ENCODE measurements at regions of chr4 and their contacts with region 1.

Region 1: GRCh38 chr4:122469457-122469856 is 12.9 kb upstream of the IL2 start:
- DNase-seq: no peak
- H3K4me3 ChIP-seq: no peak overlapping the region
- H3K27ac ChIP-seq: no peak overlapping the region
- H3K4me1 ChIP-seq: no peaks in the 10 kb centered on the region
- H3K27me3 ChIP-seq: no peaks in the 10 kb centered on the region
- CTCF ChIP-seq: no peak
- EP300 ChIP-seq: no peak
- POLR2A ChIP-seq: no peak

Region 2: GRCh38 chr4:121594796-121595526 is 874.5 kb before region 1 on chr4:
- intact Hi-C with region 1: loop called in 1 of 4 experiments (anchors 5 kb)
- DNase-seq: no peak
- H3K4me3 ChIP-seq: no peak overlapping the region
- H3K27ac ChIP-seq: no peak overlapping the region
- H3K4me1 ChIP-seq: no peaks in the 10 kb centered on the region
- H3K27me3 ChIP-seq: no peaks in the 10 kb centered on the region
- CTCF ChIP-seq: no peak
- EP300 ChIP-seq: no peak
- POLR2A ChIP-seq: no peak

Region 3: GRCh38 chr4:122099896-122100295 is 369.6 kb before region 1 on chr4:
- intact Hi-C with region 1: no loop called
- DNase-seq: no peak
- H3K4me3 ChIP-seq: no peak overlapping the region
- H3K27ac ChIP-seq: no peak overlapping the region
- H3K4me1 ChIP-seq: no peaks in the 10 kb centered on the region
- H3K27me3 ChIP-seq: no peaks in the 10 kb centered on the region
- CTCF ChIP-seq: no peak
- EP300 ChIP-seq: no peak
- POLR2A ChIP-seq: no peak